Activated T-helper 2 cell treated with anti-CD3 and anti-CD28 coated beads, Interferon-gamma antibody, Interleukin-2, Interleukin-4, amounts not matched to agents 10 μg/mL and 5 μg/mL and 100 μg/mL, durations not matched to agents 14 hours and 24 hours and 36 hours (primary cell): ENCODE measurements at regions of chr11 and their contacts with region 1.

Region 1: DNA sequence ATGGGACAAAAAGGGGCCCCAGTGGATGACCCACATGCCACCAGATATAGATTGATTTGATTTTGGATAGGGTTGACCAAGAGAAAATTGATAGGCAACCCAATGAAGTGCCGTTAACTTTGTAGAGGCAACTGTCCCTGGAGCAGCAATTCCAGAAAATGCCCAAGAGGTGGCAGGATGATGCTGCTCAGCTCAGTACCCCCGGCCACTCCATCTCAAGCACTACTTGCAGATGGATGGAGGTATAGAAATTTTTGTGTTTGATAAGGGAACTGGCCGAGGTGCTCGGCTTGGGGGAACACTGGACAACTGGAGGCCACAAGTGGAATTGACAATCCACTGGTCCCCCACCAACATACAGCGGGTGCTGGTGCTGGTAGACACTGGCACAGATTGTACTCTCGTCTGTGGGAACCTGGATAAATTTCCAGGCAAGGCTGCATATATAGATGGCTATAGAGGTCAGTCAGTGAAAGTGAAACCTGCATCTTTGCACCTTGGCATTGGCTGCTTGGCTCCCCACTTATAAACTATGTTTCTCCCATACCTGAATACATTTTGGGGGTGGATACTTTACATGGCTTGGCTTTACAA is 86.3 kb downstream of the CCDC83 start:
- DNase-seq: no peak
- H3K4me3 Mint-ChIP-seq: no peak overlapping the region
- H3K27ac Mint-ChIP-seq: no peak overlapping the region
- H3K4me1 Mint-ChIP-seq: peaks cover 22% of the 10 kb centered on the region
- H3K27me3 Mint-ChIP-seq: no peaks in the 10 kb centered on the region

Region 2: DNA sequence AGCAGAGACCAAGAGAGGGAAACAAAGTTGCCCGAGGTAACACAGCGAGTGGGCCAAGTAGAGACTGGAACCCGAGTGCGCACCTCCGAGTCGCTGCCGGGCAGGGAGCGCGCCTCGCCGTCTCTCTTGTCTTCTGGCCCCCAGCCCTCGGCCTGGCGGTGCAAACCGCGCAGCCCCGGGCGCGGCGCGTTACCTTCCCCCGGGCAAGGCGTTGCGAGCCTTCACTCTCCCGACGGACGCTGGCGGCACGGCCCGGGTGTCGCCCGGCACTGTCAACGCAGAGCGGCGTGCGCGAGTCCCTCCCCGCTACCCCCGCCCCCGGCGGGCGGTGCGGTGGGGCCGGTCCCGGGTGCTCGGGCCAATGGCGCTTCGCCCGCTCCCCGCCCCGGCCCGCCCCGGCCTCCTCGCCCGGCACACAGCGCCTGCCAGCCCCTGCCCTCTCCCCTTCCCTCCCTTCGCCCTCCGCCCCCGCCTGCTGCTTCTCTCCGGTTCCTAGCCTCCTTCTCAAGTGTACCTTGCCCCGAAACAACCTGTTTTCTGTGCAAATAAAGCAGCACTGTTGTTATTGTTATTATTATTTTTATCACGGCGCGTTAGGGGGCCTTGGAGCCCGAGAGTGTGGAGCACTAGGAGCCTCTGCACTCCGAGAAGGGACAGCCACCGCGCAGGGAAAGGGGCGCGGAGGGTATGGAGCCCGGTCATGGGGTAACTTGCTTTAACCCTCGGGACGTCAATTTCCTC is 130.4 kb before region 1 on chr11 and contains the start of gene SYTL2:
- intact Hi-C with region 1: no loop called
- DNase-seq: peak; percentile 74
- H3K4me3 Mint-ChIP-seq: peak within 1 kb of the TSS; percentile 82
- H3K27ac Mint-ChIP-seq: peak within 1 kb of the TSS; percentile 52
- H3K4me1 Mint-ChIP-seq: peaks cover 45% of the 10 kb centered on the region
- H3K27me3 Mint-ChIP-seq: peaks cover 3% of the 10 kb centered on the region
- total RNA-seq, gene SYTL2: 16.0 and 17.3 TPM in 2 replicates

Region 3: GRCh38 chr11:86079421-86079820 is 137.9 kb after region 1 on chr11:
- intact Hi-C with region 1: no loop called
- DNase-seq: no peak
- H3K4me3 Mint-ChIP-seq: no peak overlapping the region
- H3K27ac Mint-ChIP-seq: no peak overlapping the region
- H3K4me1 Mint-ChIP-seq: no peaks in the 10 kb centered on the region
- H3K27me3 Mint-ChIP-seq: peaks cover 9% of the 10 kb centered on the region

Region 4: DNA sequence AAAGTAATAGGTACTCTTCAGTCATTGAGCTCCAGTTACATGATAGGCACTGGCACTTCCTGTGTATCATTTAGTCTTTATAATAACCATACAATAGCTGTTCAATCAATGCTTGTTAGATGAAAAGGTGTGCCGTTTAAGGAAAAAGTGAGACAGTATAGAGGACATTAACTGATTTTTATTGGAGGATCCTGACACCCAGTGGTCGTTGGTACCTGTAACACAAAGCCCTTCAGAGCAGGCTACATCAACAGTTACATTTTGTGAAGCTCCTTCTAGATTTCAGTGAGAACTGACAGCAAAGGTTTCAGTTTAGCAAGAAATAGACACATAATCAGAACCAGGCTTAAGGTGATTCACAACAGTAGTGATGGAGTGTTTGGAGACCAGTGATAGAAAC is 477.4 kb after region 1 on chr11:
- intact Hi-C with region 1: loop called (anchors 10 kb)
- DNase-seq: no peak
- H3K4me3 Mint-ChIP-seq: no peak overlapping the region
- H3K27ac Mint-ChIP-seq: no peak overlapping the region
- H3K4me1 Mint-ChIP-seq: no peaks in the 10 kb centered on the region
- H3K27me3 Mint-ChIP-seq: no peaks in the 10 kb centered on the region

Region 5: DNA sequence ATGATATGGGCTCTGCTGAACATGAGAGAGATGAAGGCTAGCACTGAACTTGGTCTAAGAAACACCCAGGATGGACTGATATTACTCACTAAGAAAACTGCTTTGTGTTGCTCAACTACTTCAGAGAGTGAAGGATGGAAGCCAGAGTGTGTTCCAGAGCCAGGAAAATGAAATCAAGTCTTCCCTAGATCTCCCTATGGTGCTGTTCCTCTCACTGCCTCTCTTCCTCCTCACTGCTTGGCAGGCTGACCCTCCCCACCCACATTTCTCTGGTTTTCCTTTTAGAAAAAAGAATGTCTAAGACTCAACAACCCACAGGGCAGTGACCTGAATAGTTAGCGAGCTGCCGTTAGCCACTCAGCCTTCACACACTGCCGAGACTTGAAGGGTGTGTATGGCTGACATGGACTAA is 498.8 kb after region 1 on chr11:
- intact Hi-C with region 1: loop called (anchors 10 kb)
- DNase-seq: no peak
- H3K4me3 Mint-ChIP-seq: no peak overlapping the region
- H3K27ac Mint-ChIP-seq: no peak overlapping the region
- H3K4me1 Mint-ChIP-seq: peaks cover 43% of the 10 kb centered on the region
- H3K27me3 Mint-ChIP-seq: no peaks in the 10 kb centered on the region

Region 6: GRCh38 chr11:86608251-86608799 is 666.8 kb after region 1 on chr11:
- intact Hi-C with region 1: loop called (anchors 5 kb)
- DNase-seq: no peak
- H3K4me3 Mint-ChIP-seq: no peak overlapping the region
- H3K27ac Mint-ChIP-seq: no peak overlapping the region
- H3K4me1 Mint-ChIP-seq: peaks cover 8% of the 10 kb centered on the region
- H3K27me3 Mint-ChIP-seq: no peaks in the 10 kb centered on the region